ENCODE measurements at regions of chr7 and their contacts with region 1.

Region 1: DNA sequence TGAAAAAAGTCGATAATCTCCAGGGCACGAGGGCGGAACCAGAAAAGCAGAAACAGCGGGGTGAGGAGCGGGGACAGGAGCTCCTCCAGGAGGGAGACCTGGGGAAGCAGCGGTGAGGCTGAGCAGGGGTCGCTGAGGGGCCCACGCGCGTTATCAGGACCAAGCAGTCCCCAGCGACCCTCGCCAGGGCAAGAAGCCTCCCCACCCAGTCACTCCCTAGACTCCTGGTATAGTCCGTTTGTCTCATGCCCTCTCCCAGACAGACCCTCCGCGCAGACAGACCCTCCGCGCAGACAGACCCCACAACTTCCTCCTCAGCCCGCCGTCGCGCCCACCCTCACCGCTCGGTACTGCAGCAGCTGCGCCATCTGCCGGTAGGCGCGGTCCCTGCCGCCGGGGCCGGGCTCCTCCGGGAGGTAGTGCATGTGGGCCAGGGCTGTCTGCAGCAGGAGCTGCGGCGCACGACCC is 6.3 kb downstream of the ATG9B start:
- DNase-seq: peak; percentile 95
- ATAC-seq: peak; percentile 69
- H3K4me3 Mint-ChIP-seq: peak overlapping the region; percentile 68
- H3K27ac Mint-ChIP-seq: no peak overlapping the region
- H3K4me1 Mint-ChIP-seq: peaks cover 39% of the 10 kb centered on the region
- H3K27me3 Mint-ChIP-seq: peaks cover 82% of the 10 kb centered on the region
- CTCF ChIP-seq: peak; percentile 83

Region 2: DNA sequence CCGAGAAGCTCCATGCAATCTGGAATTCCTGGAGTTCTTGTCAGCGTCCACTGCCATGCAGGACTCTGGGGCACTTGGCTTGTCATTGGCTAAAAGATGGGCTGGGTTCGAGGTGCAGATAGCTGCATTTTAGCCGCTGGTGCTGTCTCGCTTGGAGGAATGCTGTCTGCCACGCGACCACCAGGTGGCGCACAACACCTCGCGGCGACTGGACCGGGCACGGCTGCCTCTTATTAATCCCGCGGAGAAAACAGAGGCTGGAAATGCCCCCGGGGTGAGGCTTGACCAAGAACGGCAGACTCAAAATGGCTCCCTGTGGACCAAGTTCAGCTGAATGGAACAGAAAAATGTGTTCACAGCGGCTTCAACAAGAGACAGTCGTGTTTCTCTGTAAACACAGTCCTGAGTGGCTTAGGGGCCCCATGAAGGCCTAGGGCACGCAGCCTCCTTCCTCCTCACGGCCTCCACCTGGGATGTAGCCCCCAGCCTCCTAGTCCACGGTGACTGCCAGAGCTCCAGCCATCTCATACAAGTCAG is 119.4 kb before region 1 on chr7:
- CTCF ChIA-PET with region 1: interaction called, 16 read pairs
- POLR2A ChIA-PET with region 1: no interaction called
- DNase-seq: peak; percentile 86
- ATAC-seq: peak; percentile 75
- H3K4me3 Mint-ChIP-seq: no peak overlapping the region
- H3K27ac Mint-ChIP-seq: no peak overlapping the region
- H3K4me1 Mint-ChIP-seq: peaks cover 37% of the 10 kb centered on the region
- H3K27me3 Mint-ChIP-seq: peaks cover 59% of the 10 kb centered on the region
- CTCF ChIP-seq: peak; percentile 90

Region 3: GRCh38 chr7:150962553-150963399 is 55.2 kb before region 1 on chr7:
- CTCF ChIA-PET with region 1: interaction called, 30 read pairs
- POLR2A ChIA-PET with region 1: no interaction called
- DNase-seq: peak; percentile 83
- ATAC-seq: peak; percentile 93
- H3K4me3 Mint-ChIP-seq: no peak overlapping the region
- H3K27ac Mint-ChIP-seq: no peak overlapping the region
- H3K4me1 Mint-ChIP-seq: peaks cover 17% of the 10 kb centered on the region
- H3K27me3 Mint-ChIP-seq: no peaks in the 10 kb centered on the region
- CTCF ChIP-seq: peak; percentile 56

Region 4: GRCh38 chr7:150974468-150975391 is 43.3 kb before region 1 on chr7:
- CTCF ChIA-PET with region 1: interaction called, 21 read pairs
- POLR2A ChIA-PET with region 1: no interaction called
- DNase-seq: peak; percentile 62
- ATAC-seq: peak; percentile 2; the same call in 1 of the 2 replicates
- H3K4me3 Mint-ChIP-seq: peak overlapping the region; percentile 82
- H3K27ac Mint-ChIP-seq: no peak overlapping the region
- H3K4me1 Mint-ChIP-seq: peaks cover 52% of the 10 kb centered on the region
- H3K27me3 Mint-ChIP-seq: peaks cover 30% of the 10 kb centered on the region
- CTCF ChIP-seq: no peak

Region 5: GRCh38 chr7:151028131-151028947 is 10.4 kb after region 1 on chr7 and contains the start of gene ABCB8:
- CTCF ChIA-PET with region 1: interaction called, 75 read pairs
- POLR2A ChIA-PET with region 1: interaction called, 5 read pairs
- DNase-seq: peak; percentile 99
- ATAC-seq: peak; percentile 95
- H3K4me3 Mint-ChIP-seq: peak within 1 kb of the TSS; percentile 92
- H3K27ac Mint-ChIP-seq: peak within 1 kb of the TSS; percentile 99
- H3K4me1 Mint-ChIP-seq: peaks cover 24% of the 10 kb centered on the region
- H3K27me3 Mint-ChIP-seq: peaks cover 8% of the 10 kb centered on the region; the same call in 1 of the 2 replicates
- CTCF ChIP-seq: no peak
- total RNA-seq, gene ABCB8: 27.9 to 35.9 TPM (median 28.4 TPM) in 3 replicates

Region 6: GRCh38 chr7:151057989-151058780 is 40.2 kb after region 1 on chr7:
- CTCF ChIA-PET with region 1: interaction called, 34 read pairs
- POLR2A ChIA-PET with region 1: interaction called, 8 read pairs
- DNase-seq: peak; percentile 98
- ATAC-seq: peak; percentile 79
- H3K4me3 Mint-ChIP-seq: peak overlapping the region; percentile 98
- H3K27ac Mint-ChIP-seq: peak overlapping the region; percentile 93
- H3K4me1 Mint-ChIP-seq: peaks cover 38% of the 10 kb centered on the region
- H3K27me3 Mint-ChIP-seq: peaks cover 7% of the 10 kb centered on the region
- CTCF ChIP-seq: no peak

Region 7: DNA sequence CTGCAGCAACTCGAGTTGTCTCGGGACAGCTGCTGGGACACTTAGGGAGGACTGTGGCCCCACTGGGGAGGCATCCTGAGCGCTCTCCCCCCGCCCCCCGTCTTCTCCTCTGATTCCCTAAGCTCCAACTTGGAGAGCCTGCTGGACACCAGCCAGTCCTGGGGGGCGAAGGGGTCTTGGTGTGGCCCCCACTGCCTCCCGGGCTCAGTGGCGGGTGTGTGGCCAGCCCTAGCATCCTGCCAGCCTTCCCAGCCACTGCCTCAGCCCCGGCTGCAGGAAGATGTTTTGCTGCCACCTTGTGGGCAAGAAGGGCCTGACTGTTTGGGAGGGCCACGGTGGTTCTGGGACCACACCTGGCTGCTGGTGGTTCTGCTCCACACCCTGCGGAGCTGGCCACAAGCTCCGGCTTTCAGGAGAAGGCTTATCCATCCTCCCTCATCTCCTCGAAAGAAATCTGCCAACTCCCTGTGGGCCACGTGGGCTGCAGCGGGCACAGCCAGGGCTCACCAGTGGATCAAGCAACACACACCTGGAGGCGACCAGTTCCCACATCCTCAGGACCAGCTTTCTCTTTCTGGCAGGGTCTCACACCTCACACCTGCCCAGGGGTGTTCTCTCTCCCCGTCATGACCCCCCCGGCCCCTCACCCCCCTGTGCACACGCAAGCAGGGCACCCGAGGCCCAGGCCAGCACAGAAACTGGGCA is 93.1 kb after region 1 on chr7:
- CTCF ChIA-PET with region 1: interaction called, 56 read pairs
- POLR2A ChIA-PET with region 1: no interaction called
- DNase-seq: peak; percentile 89
- ATAC-seq: peak; percentile 56
- H3K4me3 Mint-ChIP-seq: no peak overlapping the region
- H3K27ac Mint-ChIP-seq: no peak overlapping the region
- H3K4me1 Mint-ChIP-seq: peaks cover 34% of the 10 kb centered on the region
- H3K27me3 Mint-ChIP-seq: peaks cover 9% of the 10 kb centered on the region
- CTCF ChIP-seq: peak; percentile 90